Activated CD4-positive, alpha-beta memory T cell treated with anti-CD3 and anti-CD28 coated beads, Interleukin-2, amount 10 ng/mL, durations not matched to agents 7 days and 5 days (primary cell): ENCODE measurements at regions of chr6 and their contacts with region 1.

Region 1: GRCh38 chr6:24991810-24992467 is 56.2 kb upstream of the RIPOR2 start:
- DNase-seq: peak; percentile 81
- H3K4me3 Mint-ChIP-seq: no peak overlapping the region
- H3K27ac Mint-ChIP-seq: peak overlapping the region; percentile 67
- H3K4me1 Mint-ChIP-seq: peaks cover 44% of the 10 kb centered on the region
- H3K27me3 Mint-ChIP-seq: no peaks in the 10 kb centered on the region

Region 2: GRCh38 chr6:24899997-24900325 is 92.0 kb before region 1 on chr6:
- CTCF ChIA-PET with region 1: interaction called, 10 read pairs
- POLR2A ChIA-PET with region 1: interaction called, 8 read pairs
- DNase-seq: peak; percentile 21
- H3K4me3 Mint-ChIP-seq: no peak overlapping the region
- H3K27ac Mint-ChIP-seq: peak overlapping the region; percentile 62
- H3K4me1 Mint-ChIP-seq: peaks cover 66% of the 10 kb centered on the region
- H3K27me3 Mint-ChIP-seq: no peaks in the 10 kb centered on the region

Region 3: DNA sequence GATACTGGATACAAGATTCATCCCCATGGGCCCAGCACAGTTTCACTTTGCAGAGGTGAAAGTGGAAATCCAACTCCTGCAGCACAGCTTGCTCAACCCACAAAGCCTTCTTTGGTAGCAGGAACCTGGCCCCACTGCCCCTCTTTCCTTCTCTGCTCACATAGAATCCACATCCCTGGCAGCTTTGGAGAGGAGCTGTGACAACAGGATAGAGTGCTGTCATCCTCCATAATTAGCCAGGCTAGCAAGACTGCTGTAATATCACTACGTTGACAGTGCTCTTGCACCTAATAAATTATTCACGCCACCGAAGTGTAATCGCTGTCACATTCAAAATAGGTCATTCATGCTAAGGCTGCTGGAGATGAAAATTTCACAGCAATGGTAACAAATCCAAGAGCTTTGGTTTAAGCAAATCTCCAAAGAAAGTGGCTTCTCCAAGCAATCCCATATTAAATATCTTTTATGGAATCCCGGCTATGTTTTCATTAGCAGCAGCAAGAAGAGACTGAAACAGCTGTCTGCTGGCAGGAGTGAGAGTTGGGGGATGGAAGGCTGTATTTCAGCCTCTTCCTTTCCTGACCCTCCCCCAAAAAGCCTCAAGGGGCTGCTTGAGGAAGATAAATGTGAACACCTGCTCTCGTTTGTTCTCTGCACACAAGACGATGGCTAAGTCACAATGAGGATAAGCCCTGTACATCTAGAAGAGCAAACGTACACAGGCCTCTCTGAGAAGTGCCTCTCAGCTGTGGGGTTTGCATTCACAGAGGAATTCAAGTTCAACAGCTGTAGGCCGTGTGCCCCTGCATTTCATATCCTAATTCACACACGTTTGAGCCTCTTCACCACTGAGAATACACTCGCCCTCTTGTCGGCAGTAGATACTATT is 72.7 kb before region 1 on chr6:
- CTCF ChIA-PET with region 1: interaction called, 73 read pairs
- POLR2A ChIA-PET with region 1: interaction called, 47 read pairs
- DNase-seq: no peak
- H3K4me3 Mint-ChIP-seq: peak overlapping the region; percentile 25
- H3K27ac Mint-ChIP-seq: peak overlapping the region; percentile 48
- H3K4me1 Mint-ChIP-seq: peaks cover 80% of the 10 kb centered on the region
- H3K27me3 Mint-ChIP-seq: no peaks in the 10 kb centered on the region

Region 4: GRCh38 chr6:24960991-24961475 is 30.9 kb before region 1 on chr6:
- CTCF ChIA-PET with region 1: interaction called, 18 read pairs
- POLR2A ChIA-PET with region 1: interaction called, 6 read pairs
- DNase-seq: no peak
- H3K4me3 Mint-ChIP-seq: no peak overlapping the region
- H3K27ac Mint-ChIP-seq: peak overlapping the region; percentile 64
- H3K4me1 Mint-ChIP-seq: peaks cover 59% of the 10 kb centered on the region
- H3K27me3 Mint-ChIP-seq: no peaks in the 10 kb centered on the region

Region 5: GRCh38 chr6:24980507-24981387 is 11.2 kb before region 1 on chr6:
- CTCF ChIA-PET with region 1: interaction called, 32 read pairs
- POLR2A ChIA-PET with region 1: interaction called, 19 read pairs
- DNase-seq: no peak
- H3K4me3 Mint-ChIP-seq: no peak overlapping the region
- H3K27ac Mint-ChIP-seq: no peak overlapping the region
- H3K4me1 Mint-ChIP-seq: peaks cover 24% of the 10 kb centered on the region
- H3K27me3 Mint-ChIP-seq: no peaks in the 10 kb centered on the region

Region 6: DNA sequence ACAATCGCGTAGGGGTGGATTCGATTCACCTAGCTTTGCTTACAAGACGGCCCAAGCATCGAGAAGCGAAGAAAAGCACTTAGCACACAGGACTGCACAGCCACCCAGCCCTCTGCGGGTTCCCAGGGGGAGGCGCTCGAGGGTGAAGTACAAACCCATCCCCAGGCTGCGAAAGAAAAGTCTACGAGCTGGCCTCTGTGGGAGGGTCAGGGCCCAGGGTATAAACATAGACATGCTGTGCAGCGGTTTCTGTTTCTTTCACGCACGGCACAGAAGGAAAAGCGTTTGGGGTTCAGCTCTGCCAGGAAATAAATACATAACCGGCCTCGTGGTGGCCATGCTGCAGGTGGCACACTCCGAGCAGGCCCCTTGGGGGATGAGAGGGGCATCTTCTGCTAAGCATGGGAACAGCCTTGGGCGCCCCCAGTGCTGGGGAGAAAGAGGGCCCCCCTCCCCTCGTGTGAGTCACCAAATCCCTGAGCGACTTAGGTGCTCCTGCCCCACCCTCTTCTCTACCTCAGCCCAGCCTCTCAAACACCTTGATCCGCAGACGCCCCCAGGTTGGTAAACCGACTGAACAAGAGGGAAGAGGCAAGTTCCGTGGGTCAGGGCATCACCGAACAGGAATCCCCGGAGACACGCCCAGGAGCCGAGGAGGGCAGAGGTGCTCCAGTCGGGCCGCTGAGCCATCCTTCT is 35.4 kb after region 1 on chr6:
- CTCF ChIA-PET with region 1: interaction called, 15 read pairs
- POLR2A ChIA-PET with region 1: interaction called, 8 read pairs
- DNase-seq: peak; percentile 89
- H3K4me3 Mint-ChIP-seq: peak overlapping the region; percentile 67
- H3K27ac Mint-ChIP-seq: peak overlapping the region; percentile 81
- H3K4me1 Mint-ChIP-seq: peaks cover 57% of the 10 kb centered on the region
- H3K27me3 Mint-ChIP-seq: no peaks in the 10 kb centered on the region

Region 7: GRCh38 chr6:25107218-25107617 is 115.3 kb after region 1 on chr6:
- CTCF ChIA-PET with region 1: no interaction called
- POLR2A ChIA-PET with region 1: no interaction called
- DNase-seq: no peak
- H3K4me3 Mint-ChIP-seq: no peak overlapping the region
- H3K27ac Mint-ChIP-seq: no peak overlapping the region
- H3K4me1 Mint-ChIP-seq: peaks cover 20% of the 10 kb centered on the region
- H3K27me3 Mint-ChIP-seq: no peaks in the 10 kb centered on the region